Mammary epithelial cell (primary cell): ENCODE measurements at regions of chr20 and their contacts with region 1.

Region 1: DNA sequence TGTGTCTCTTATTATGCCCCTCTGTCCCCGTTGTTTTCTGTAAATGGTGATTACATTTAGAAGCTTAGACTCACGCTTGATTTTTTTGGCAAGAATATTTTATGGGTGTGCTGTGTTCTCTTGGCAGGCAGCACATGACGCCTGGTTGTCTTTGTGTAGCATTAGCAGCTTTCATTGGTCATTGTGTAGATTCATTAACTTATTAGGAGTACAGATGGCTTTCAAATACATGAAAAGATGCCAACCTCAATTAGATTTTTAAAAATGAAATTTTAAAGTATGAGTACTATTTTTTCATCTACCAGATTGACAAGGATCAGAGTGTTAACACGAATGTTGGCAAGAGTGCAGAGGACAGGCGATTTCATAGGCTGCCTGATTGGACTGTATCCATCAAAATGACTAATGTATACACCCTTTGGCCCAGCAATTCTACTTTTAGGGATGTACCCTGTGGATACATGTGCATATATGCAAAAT is 15.2 kb downstream of the COX4I2 start:
- DNase-seq: no peak
- H3K4me3 ChIP-seq: no peak overlapping the region
- H3K27ac ChIP-seq: no peak overlapping the region
- H3K4me1 ChIP-seq: no peaks in the 10 kb centered on the region
- H3K27me3 ChIP-seq: no peaks in the 10 kb centered on the region
- CTCF ChIP-seq: no peak

Region 2: DNA sequence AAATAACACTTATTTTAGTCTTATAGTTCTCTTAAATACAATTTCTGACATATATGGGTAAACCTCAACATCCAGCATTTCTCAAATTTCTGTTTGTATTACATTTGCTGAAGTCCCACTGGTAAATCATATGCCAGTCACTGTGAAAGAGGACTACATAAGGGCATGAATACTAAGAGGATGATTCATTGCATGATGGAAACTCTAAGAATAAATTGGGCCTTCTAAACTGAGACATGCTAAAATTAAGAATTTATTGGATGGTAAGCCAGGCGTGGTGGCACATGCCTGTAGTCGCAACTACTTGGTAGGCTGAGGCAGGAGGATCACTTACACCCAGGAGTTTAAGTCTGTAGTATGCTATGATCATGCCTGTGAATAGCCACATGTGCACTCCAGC is 200.4 kb before region 1 on chr20:
- CTCF ChIA-PET with region 1: no interaction called
- dilution Hi-C with region 1: no loop called
- in situ Hi-C with region 1: no loop called
- intact Hi-C with region 1: no loop called
- DNase-seq: no peak
- H3K4me3 ChIP-seq: no peak overlapping the region
- H3K27ac ChIP-seq: no peak overlapping the region
- H3K4me1 ChIP-seq: no peaks in the 10 kb centered on the region
- H3K27me3 ChIP-seq: no peaks in the 10 kb centered on the region
- CTCF ChIP-seq: no peak

Region 3: GRCh38 chr20:31684153-31685015 is 31.4 kb after region 1 on chr20:
- CTCF ChIA-PET with region 1: no interaction called
- dilution Hi-C with region 1: loop called (anchors 5 kb)
- in situ Hi-C with region 1: no loop called
- intact Hi-C with region 1: no loop called
- DNase-seq: no peak
- H3K4me3 ChIP-seq: no peak overlapping the region
- H3K27ac ChIP-seq: no peak overlapping the region
- H3K4me1 ChIP-seq: peaks cover 15% of the 10 kb centered on the region
- H3K27me3 ChIP-seq: no peaks in the 10 kb centered on the region
- CTCF ChIP-seq: no peak